ENCODE measurements at regions of chr1 and their contacts with region 1.

Region 1: GRCh38 chr1:162391790-162392563 is 10.4 kb downstream of the C1orf226 start:
- DNase-seq: no peak
- ATAC-seq: peak; percentile 66
- H3K4me3 ChIP-seq: no peak overlapping the region
- H3K27ac ChIP-seq: no peak overlapping the region
- H3K4me1 ChIP-seq: 0 out of 2 replicates have a peak, but pooled peaks cover 4% of the 10 kb centered on the region
- H3K27me3 ChIP-seq: peaks cover 0 to 5% of the 10 kb centered on the region in 2 experiments; a peak in 2 of 4 replicates
- CTCF ChIP-seq: peak; percentile 71 to 75 (median 74)
- EP300 ChIP-seq: no peak
- POLR2A ChIP-seq: no peak
- RAD21 ChIP-seq: peak; percentile 77

Region 2: GRCh38 chr1:162056043-162056442 is 335.9 kb before region 1 on chr1:
- CTCF ChIA-PET with region 1: interaction called, 16 read pairs
- POLR2A ChIA-PET with region 1: no interaction called
- RAD21 ChIA-PET with region 1: interaction called, 6 read pairs
- SMC1A ChIA-PET with region 1: interaction called, 4 read pairs
- in situ Hi-C with region 1: loop called (anchors 5 kb)
- intact Hi-C with region 1: loop called (anchors 1 kb)
- DNase-seq: peak; percentile 17
- ATAC-seq: peak; percentile 99
- H3K4me3 ChIP-seq: no peak overlapping the region
- H3K27ac ChIP-seq: no peak overlapping the region
- H3K4me1 ChIP-seq: no peaks in the 10 kb centered on the region
- H3K27me3 ChIP-seq: peaks cover 0 to 2% of the 10 kb centered on the region in 2 experiments; a peak in 3 of 4 replicates
- CTCF ChIP-seq: peak; percentile 82 to 90 (median 88)
- EP300 ChIP-seq: no peak
- POLR2A ChIP-seq: no peak
- RAD21 ChIP-seq: peak; percentile 90

Region 3: GRCh38 chr1:162276493-162276892 is 115.5 kb before region 1 on chr1:
- CTCF ChIA-PET with region 1: interaction called, 4 read pairs
- POLR2A ChIA-PET with region 1: no interaction called
- RAD21 ChIA-PET with region 1: no interaction called
- SMC1A ChIA-PET with region 1: no interaction called
- in situ Hi-C with region 1: no loop called
- intact Hi-C with region 1: loop called (anchors 5 kb)
- DNase-seq: no peak
- ATAC-seq: peak; percentile 61; the same call in 2 of the 3 replicates
- H3K4me3 ChIP-seq: no peak overlapping the region
- H3K27ac ChIP-seq: no peak overlapping the region
- H3K4me1 ChIP-seq: no peaks in the 10 kb centered on the region
- H3K27me3 ChIP-seq: peaks cover 0 to 2% of the 10 kb centered on the region in 2 experiments; a peak in 1 of 4 replicates
- CTCF ChIP-seq: peak in 2 of 3 experiments; percentile 32 to 53; a peak in 4 of 6 replicates
- EP300 ChIP-seq: no peak
- POLR2A ChIP-seq: no peak
- RAD21 ChIP-seq: peak; percentile 62

Region 4: DNA sequence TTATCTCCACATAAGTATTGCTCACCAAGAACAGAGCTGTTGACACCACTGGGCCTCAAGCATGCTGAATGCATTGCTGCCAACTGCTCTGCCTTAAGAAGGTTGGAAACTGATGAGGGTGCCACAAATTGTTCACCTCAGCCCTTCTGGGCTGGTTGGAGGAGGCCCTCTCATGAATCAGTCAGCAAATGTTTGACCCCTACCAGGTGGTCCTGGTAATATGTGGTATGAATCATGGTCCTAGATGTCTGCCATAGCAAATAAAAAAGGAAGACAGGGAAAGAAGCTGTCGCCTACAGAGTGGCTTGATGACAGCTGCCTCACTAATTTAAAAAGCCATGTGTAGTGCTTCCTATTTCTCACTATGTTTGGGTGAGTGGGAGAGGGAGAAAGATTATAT is 27.5 kb before region 1 on chr1:
- CTCF ChIA-PET with region 1: interaction called, 104 read pairs
- POLR2A ChIA-PET with region 1: interaction called, 3 read pairs
- RAD21 ChIA-PET with region 1: interaction called, 29 read pairs
- SMC1A ChIA-PET with region 1: interaction called, 31 read pairs
- in situ Hi-C with region 1: no loop called
- intact Hi-C with region 1: no loop called
- DNase-seq: no peak
- ATAC-seq: no peak
- H3K4me3 ChIP-seq: no peak overlapping the region
- H3K27ac ChIP-seq: no peak overlapping the region
- H3K4me1 ChIP-seq: peaks cover 17% of the 10 kb centered on the region
- H3K27me3 ChIP-seq: no peaks in the 10 kb centered on the region
- CTCF ChIP-seq: no peak
- EP300 ChIP-seq: no peak
- POLR2A ChIP-seq: no peak
- RAD21 ChIP-seq: no peak

Region 5: GRCh38 chr1:162381383-162381782 is 10.6 kb before region 1 on chr1 and contains the start of gene C1orf226:
- CTCF ChIA-PET with region 1: interaction called, 30 read pairs
- POLR2A ChIA-PET with region 1: no interaction called
- RAD21 ChIA-PET with region 1: interaction called, 4 read pairs
- SMC1A ChIA-PET with region 1: interaction called, 3 read pairs
- in situ Hi-C with region 1: no loop called
- intact Hi-C with region 1: no loop called
- DNase-seq: no peak
- ATAC-seq: no peak
- H3K4me3 ChIP-seq: no peak within 1 kb of the TSS
- H3K27ac ChIP-seq: no peak within 1 kb of the TSS
- H3K4me1 ChIP-seq: no peaks in the 10 kb centered on the region
- H3K27me3 ChIP-seq: no peaks in the 10 kb centered on the region
- CTCF ChIP-seq: no peak
- EP300 ChIP-seq: no peak
- POLR2A ChIP-seq: no peak
- RAD21 ChIP-seq: no peak
- polyA plus RNA-seq, gene C1orf226: not detected

Region 6: GRCh38 chr1:162444903-162445302 is 52.9 kb after region 1 on chr1:
- CTCF ChIA-PET with region 1: no interaction called
- POLR2A ChIA-PET with region 1: no interaction called
- RAD21 ChIA-PET with region 1: no interaction called
- SMC1A ChIA-PET with region 1: no interaction called
- in situ Hi-C with region 1: no loop called
- intact Hi-C with region 1: no loop called
- DNase-seq: no peak
- ATAC-seq: no peak
- H3K4me3 ChIP-seq: no peak overlapping the region
- H3K27ac ChIP-seq: no peak overlapping the region
- H3K4me1 ChIP-seq: peaks cover 4% of the 10 kb centered on the region; the same call in 1 of the 2 replicates
- H3K27me3 ChIP-seq: peaks cover 0 to 2% of the 10 kb centered on the region in 2 experiments; a peak in 2 of 4 replicates
- CTCF ChIP-seq: no peak
- EP300 ChIP-seq: no peak
- POLR2A ChIP-seq: no peak
- RAD21 ChIP-seq: no peak